ENCODE measurements at regions of chr5 and their contacts with region 1.

Region 1: DNA sequence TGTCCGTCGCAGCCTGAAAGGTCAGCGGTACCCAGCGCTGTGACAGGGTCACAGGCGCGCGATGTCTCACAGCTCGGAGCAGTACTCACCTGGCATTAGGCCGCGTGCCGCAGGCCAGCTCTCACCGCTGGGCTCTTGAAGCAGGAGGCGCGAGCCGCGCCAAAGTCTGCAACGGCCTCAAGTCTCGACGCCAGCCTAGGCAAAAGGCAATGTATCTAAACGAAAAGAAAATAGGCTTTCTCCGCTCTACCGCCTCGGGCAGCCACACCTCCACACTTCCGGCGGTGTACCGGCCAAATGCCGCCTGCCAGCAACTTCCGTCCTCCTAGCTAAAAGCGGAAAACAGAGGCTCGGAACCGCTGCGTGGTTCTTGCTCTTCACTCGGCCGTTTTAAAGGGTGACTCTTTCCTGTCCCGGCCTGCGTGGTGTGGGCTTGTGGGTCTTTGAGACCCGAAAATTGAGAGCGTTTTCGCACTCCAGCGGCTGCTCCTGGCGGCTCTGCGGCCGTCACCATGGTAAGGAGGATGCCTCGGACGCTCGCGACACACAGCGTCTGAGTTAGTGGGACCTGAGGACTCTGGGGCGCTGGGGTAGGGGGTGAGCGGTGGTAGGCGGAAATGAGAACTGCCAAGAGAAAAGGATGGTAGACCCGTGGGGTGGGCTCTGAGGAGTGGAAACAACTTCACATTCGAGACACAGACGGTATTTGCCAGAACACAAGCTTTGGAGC is at the starts of genes GFM2 and NSA2:
- DNase-seq: peak; percentile 90 to 96
- ATAC-seq: peak; percentile 90 to 97 (median 95)
- H3K4me3 ChIP-seq: peak within 1 kb of the TSS; percentile 94
- H3K4me3 Mint-ChIP-seq: peak within 1 kb of the TSS; percentile 99
- H3K27ac ChIP-seq: peak within 1 kb of the TSS; percentile 67
- H3K27ac Mint-ChIP-seq: peak within 1 kb of the TSS; percentile 96 to 98
- H3K4me1 ChIP-seq: peaks cover 16% of the 10 kb centered on the region
- H3K4me1 Mint-ChIP-seq: peaks cover 27 to 40% of the 10 kb centered on the region in 2 donors
- H3K27me3 ChIP-seq: no peaks in the 10 kb centered on the region
- H3K27me3 Mint-ChIP-seq: no peaks in the 10 kb centered on the region
- CTCF ChIP-seq: no peak
- total RNA-seq, gene GFM2: 11.9 to 27.9 (median 19.1) TPM
- total RNA-seq, gene NSA2: 53.2 to 75.8 (median 74.0) TPM

Region 2: GRCh38 chr5:74342948-74343682 is 423.9 kb before region 1 on chr5:
- intact Hi-C with region 1: no loop called
- DNase-seq: no peak
- ATAC-seq: no peak
- H3K4me3 ChIP-seq: no peak overlapping the region
- H3K4me3 Mint-ChIP-seq: no peak overlapping the region
- H3K27ac ChIP-seq: no peak overlapping the region
- H3K27ac Mint-ChIP-seq: no peak overlapping the region
- H3K4me1 ChIP-seq: no peaks in the 10 kb centered on the region
- H3K4me1 Mint-ChIP-seq: no peaks in the 10 kb centered on the region
- H3K27me3 ChIP-seq: peaks cover 2% of the 10 kb centered on the region
- H3K27me3 Mint-ChIP-seq: peaks cover 15 to 49% of the 10 kb centered on the region in 2 donors
- CTCF ChIP-seq: no peak

Region 3: DNA sequence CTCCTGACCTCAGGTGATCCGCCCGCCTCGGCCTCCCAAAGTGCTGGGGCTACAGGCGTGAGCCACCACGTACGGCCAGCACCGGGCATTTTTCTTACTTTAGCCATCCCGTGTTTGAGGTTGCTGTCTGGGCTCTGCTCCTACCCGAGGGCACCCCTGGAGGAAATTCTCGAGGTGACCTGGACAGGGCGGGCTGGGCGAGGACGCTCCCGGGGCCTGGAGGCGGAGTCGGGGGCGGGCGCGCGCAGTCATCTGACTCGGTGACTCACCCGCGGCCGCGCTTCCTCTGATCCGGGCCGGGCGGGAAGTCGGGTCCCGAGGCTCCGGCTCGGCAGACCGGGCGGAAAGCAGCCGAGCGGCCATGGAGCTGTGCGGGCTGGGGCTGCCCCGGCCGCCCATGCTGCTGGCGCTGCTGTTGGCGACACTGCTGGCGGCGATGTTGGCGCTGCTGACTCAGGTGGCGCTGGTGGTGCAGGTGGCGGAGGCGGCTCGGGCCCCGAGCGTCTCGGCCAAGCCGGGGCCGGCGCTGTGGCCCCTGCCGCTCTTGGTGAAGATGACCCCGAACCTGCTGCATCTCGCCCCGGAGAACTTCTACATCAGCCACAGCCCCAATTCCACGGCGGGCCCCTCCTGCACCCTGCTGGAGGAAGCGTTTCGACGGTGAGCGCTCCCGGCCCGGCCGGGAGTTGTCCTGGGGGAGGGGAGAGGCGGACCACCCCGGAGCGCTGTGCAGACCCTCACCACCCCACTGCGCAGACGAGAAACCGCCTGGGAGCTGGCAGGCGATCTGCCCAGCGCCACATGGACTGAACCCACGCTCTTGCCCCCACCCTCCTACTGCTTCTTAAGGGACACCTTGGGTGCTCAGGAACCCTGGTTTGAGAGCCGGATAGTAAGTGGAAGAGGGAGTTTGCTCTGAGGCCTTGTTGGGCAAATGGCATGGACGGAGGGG is 81.8 kb before region 1 on chr5 and contains the start of gene HEXB:
- intact Hi-C with region 1: loop called (anchors 2 kb)
- DNase-seq: peak; percentile 87
- ATAC-seq: peak; percentile 87 to 96 (median 93)
- H3K4me3 ChIP-seq: peak within 1 kb of the TSS; percentile 93
- H3K4me3 Mint-ChIP-seq: peak within 1 kb of the TSS; percentile 83
- H3K27ac ChIP-seq: peak within 1 kb of the TSS; percentile 73
- H3K27ac Mint-ChIP-seq: peak within 1 kb of the TSS; percentile 57 to 89
- H3K4me1 ChIP-seq: peaks cover 19% of the 10 kb centered on the region
- H3K4me1 Mint-ChIP-seq: peaks cover 15 to 30% of the 10 kb centered on the region in 2 donors
- H3K27me3 ChIP-seq: no peaks in the 10 kb centered on the region
- H3K27me3 Mint-ChIP-seq: peaks cover 0 to 16% of the 10 kb centered on the region in 2 donors
- CTCF ChIP-seq: no peak
- total RNA-seq, gene HEXB: 55.3 to 61.4 (median 55.5) TPM

Region 4: DNA sequence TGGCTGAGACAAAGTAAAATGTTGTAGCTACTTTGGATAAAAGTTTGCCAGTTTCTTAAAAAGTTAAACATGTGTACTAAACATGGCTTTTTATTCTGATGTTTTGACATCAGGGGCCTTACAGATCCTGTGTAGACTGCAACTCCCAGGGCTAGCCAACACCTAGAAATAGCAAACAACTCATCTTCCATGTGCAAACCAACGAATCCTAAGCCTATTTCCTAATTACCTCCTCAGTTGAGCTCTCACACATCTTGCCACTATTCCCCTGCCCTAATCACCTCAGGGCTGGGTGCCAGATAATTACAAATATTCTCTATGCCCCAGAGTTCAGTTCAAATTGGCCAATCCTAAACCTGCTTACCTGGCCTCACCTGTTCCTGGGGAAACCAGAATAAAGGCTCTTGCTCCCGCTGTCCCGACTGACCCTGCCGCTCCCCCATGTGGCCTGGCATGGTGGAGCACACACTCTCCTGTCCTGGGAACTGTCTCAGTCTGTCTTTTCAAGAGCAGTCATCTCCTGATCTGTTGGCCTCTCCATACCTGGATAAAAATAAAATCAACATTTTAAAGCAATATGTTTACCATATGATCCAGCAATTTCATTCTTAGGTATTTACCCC is 136.3 kb after region 1 on chr5:
- intact Hi-C with region 1: loop called (anchors 5 kb)
- DNase-seq: peak in 1 of 2 donors; percentile 46
- ATAC-seq: peak; percentile 48 to 81 (median 73)
- H3K4me3 ChIP-seq: no peak overlapping the region
- H3K4me3 Mint-ChIP-seq: peak overlapping the region; percentile 53
- H3K27ac ChIP-seq: no peak overlapping the region
- H3K27ac Mint-ChIP-seq: peak overlapping the region; percentile 37 to 73
- H3K4me1 ChIP-seq: peaks cover 2% of the 10 kb centered on the region
- H3K4me1 Mint-ChIP-seq: peaks cover 10 to 13% of the 10 kb centered on the region in 2 donors
- H3K27me3 ChIP-seq: no peaks in the 10 kb centered on the region
- H3K27me3 Mint-ChIP-seq: no peaks in the 10 kb centered on the region
- CTCF ChIP-seq: no peak

Region 5: GRCh38 chr5:75336625-75337339 is 569.8 kb after region 1 on chr5 and contains the start of gene HMGCR:
- intact Hi-C with region 1: loop called (anchors 2 kb)
- DNase-seq: peak; percentile 95 to 99
- ATAC-seq: peak; percentile 90 to 98 (median 92)
- H3K4me3 ChIP-seq: peak within 1 kb of the TSS; percentile 77
- H3K4me3 Mint-ChIP-seq: no peak within 1 kb of the TSS
- H3K27ac ChIP-seq: peak within 1 kb of the TSS; percentile 82
- H3K27ac Mint-ChIP-seq: no peak within 1 kb of the TSS
- H3K4me1 ChIP-seq: peaks cover 10% of the 10 kb centered on the region
- H3K4me1 Mint-ChIP-seq: peaks cover 19 to 24% of the 10 kb centered on the region in 2 donors
- H3K27me3 ChIP-seq: no peaks in the 10 kb centered on the region
- H3K27me3 Mint-ChIP-seq: no peaks in the 10 kb centered on the region
- CTCF ChIP-seq: no peak
- total RNA-seq, gene HMGCR: 44.2 to 89.5 (median 62.6) TPM

Measured in natural killer cell (primary cell).